Heart right ventricle (tissue), 16 donors: ENCODE measurements at regions of chr14 and their contacts with region 1.

Region 1: DNA sequence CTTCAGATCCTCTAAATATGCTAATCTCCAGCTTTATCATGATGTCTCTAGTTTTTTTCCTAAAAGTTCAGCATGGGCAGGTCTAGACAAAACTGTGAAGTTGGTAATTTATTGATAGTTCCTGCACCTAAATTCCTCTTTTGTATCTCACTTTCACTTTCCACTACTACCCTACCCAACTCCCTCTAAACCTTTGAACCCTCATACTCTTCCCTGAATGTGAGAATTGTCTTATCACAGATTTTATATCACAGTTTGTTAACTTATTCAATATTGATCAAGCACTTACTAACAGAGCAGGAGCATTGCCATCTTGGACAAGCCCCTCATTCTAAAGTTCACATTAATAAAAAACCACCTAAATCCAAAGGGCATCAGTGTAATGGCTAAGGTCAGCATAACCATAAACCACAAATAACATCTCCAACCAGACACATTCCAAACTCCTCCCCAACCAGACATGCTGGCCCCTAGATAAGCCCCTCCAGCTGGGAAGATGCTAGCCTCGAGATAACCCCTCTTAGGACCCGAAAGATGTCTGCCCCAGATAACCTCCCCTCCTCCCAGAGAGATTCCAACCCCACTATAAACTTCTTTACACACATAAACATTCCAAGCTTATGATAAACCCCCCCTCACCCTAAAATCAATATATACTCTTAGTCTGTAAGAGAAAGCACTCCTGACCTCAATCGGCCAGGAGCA is 78.7 kb downstream of the FSCB start:
- DNase-seq: no peak
- ATAC-seq: no peak
- H3K4me3 ChIP-seq: no peak overlapping the region
- H3K27ac ChIP-seq: no peak overlapping the region
- H3K4me1 ChIP-seq: no peaks in the 10 kb centered on the region
- H3K27me3 ChIP-seq: no peaks in the 10 kb centered on the region
- CTCF ChIP-seq: no peak

Region 2: DNA sequence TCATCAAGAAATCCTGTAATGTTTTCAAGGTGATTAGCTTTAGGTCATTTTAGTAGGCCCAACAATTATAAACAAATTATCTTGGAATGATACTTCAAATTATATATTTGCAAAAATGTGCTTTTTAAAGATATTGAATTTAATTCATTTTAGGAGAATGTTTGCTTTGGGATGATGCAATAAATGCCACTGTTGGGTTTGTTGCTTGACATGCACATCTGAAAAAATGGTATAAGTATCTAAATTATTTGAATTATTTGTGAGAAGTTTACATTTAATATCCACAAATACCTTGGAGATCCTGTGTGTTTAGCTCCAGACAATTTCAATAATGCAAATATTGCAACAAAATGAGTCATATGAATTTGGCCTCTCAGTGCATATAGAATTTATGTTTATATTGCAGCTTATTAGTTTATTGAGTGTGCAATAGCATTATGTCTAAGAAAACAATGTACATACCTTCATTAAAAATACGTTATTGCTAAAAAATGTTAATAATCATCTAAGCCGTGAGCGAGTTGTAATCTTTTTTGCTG is 74.7 kb before region 1 on chr14:
- intact Hi-C with region 1: loop called in 1 of 10 experiments (anchors 2 kb)
- DNase-seq: no peak
- ATAC-seq: no peak
- H3K4me3 ChIP-seq: no peak overlapping the region
- H3K27ac ChIP-seq: no peak overlapping the region
- H3K4me1 ChIP-seq: no peaks in the 10 kb centered on the region
- H3K27me3 ChIP-seq: no peaks in the 10 kb centered on the region
- CTCF ChIP-seq: no peak